PC-9 (cell line): ENCODE measurements at regions of chr2 and their contacts with region 1.

Region 1: GRCh38 chr2:64114063-64114911 is 29.9 kb downstream of the PELI1 start:
- DNase-seq: peak in 1 of 2 experiments; percentile 83
- H3K4me3 ChIP-seq: no peak overlapping the region
- H3K27ac ChIP-seq: peak overlapping the region; percentile 62
- H3K4me1 ChIP-seq: peaks cover 25% of the 10 kb centered on the region
- H3K27me3 ChIP-seq: no peaks in the 10 kb centered on the region
- CTCF ChIP-seq: no peak

Region 2: GRCh38 chr2:64092502-64092901 is 21.8 kb before region 1 on chr2:
- CTCF ChIA-PET with region 1: no interaction called
- POLR2A ChIA-PET with region 1: no interaction called
- intact Hi-C with region 1: no loop called
- DNase-seq: no peak
- H3K4me3 ChIP-seq: no peak overlapping the region
- H3K27ac ChIP-seq: no peak overlapping the region
- H3K4me1 ChIP-seq: no peaks in the 10 kb centered on the region
- H3K27me3 ChIP-seq: no peaks in the 10 kb centered on the region
- CTCF ChIP-seq: no peak

Region 3: GRCh38 chr2:64137996-64138395 is 23.7 kb after region 1 on chr2:
- CTCF ChIA-PET with region 1: no interaction called
- POLR2A ChIA-PET with region 1: no interaction called
- intact Hi-C with region 1: loop called (anchors 2 kb)
- DNase-seq: peak; percentile 55 to 64
- H3K4me3 ChIP-seq: no peak overlapping the region
- H3K27ac ChIP-seq: no peak overlapping the region
- H3K4me1 ChIP-seq: peaks cover 33% of the 10 kb centered on the region
- H3K27me3 ChIP-seq: no peaks in the 10 kb centered on the region
- CTCF ChIP-seq: no peak

Region 4: DNA sequence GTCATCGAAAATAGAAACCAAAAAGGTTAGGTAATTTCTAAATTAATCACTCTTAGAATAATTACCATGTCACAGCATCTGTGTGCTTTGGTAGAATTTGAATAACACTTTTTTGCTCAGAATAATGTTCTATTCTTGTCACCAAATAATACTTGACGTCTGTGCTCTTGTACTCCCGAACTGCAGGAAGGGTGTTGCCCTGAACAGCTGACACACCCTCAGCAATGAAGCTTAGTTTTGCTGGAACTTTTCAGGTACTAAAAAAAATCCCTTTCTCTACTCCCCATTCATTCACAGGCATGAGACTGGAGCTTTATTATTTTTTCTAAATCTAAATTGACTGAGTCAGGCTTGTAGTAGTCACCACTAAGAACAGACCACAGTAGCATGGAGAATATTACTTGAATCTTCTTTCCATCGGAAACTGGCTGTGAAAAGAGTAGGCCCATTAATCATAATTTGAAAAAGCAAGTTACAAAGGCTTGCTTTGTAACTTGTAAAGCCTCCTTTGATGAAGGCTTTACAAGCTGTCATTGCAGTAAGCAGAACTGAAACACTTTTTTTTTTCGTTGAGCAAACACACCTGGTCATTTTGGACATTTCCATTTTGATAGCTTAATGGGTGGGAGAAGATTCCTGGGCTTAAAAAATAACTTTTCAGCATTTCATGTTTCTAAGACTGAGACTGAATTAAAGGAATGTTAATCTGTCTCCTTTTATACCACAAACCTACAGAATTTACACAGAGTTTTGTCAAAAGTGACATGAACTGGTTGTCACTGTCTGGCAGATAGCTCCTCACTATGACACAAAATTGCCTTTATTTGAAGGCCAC is 100.2 kb after region 1 on chr2:
- CTCF ChIA-PET with region 1: no interaction called
- POLR2A ChIA-PET with region 1: interaction called, 17 read pairs
- intact Hi-C with region 1: no loop called
- DNase-seq: peak in 1 of 2 experiments; percentile 62
- H3K4me3 ChIP-seq: no peak overlapping the region
- H3K27ac ChIP-seq: no peak overlapping the region
- H3K4me1 ChIP-seq: peaks cover 48% of the 10 kb centered on the region
- H3K27me3 ChIP-seq: no peaks in the 10 kb centered on the region
- CTCF ChIP-seq: no peak